ENCODE measurements at regions of chr2 and their contacts with region 1.

Region 1: GRCh38 chr2:26846328-26847306 is 1.3 kb upstream of the DPYSL5 start:
- DNase-seq: peak; percentile 70 to 82
- H3K4me3 ChIP-seq: no peak overlapping the region
- H3K4me3 Mint-ChIP-seq: peak overlapping the region; percentile 65
- H3K27ac Mint-ChIP-seq: no peak overlapping the region
- H3K4me1 ChIP-seq: peaks cover 24% of the 10 kb centered on the region
- H3K4me1 Mint-ChIP-seq: no peaks in the 10 kb centered on the region
- H3K27me3 ChIP-seq: no peaks in the 10 kb centered on the region; the same call in none of the 2 replicates
- H3K27me3 Mint-ChIP-seq: peaks cover 13% of the 10 kb centered on the region
- CTCF ChIP-seq: peak; percentile 89 to 93

Region 2: DNA sequence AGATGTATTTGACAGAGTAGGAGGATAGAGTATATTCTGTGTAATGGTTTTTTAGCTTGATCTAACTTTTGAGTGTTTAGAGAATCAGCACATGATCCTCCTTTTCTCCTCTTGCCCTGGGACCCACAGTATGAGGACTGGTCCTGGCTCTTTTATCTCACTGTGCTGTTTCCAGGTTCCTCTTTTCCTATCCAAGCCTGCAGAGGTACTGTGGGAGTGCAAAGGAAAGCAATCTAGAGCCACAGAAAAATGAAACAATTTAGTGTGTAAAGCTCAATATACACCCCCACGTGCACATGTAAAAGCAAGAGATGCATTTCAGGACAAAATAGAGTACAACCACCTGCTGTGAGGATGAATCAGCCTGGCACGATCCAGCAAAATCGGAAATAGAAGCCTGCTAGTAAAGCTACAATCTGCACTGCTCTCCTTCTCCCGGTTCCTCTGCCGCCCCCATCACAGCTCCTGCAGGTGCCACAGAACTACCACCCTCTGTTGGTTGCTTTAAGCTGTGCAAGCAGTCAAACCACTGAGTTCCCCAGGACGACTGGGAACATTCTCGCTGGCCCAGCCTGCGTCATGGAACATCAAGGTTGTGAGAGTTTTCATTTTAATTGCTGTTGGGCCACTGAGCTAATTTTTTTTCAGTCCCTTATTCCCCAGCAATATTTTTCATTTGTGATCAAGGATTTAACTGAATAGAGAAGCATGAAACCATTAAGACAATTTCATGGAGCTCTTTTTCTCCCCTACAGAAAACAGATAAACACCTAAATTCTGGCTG is 76.0 kb after region 1 on chr2:
- CTCF ChIA-PET with region 1: interaction called, 61 read pairs
- POLR2A ChIA-PET with region 1: no interaction called
- intact Hi-C with region 1: loop called (anchors 1 kb)
- DNase-seq: peak; percentile 63 to 66
- H3K4me3 ChIP-seq: no peak overlapping the region
- H3K4me3 Mint-ChIP-seq: no peak overlapping the region
- H3K27ac Mint-ChIP-seq: no peak overlapping the region
- H3K4me1 ChIP-seq: peaks cover 22% of the 10 kb centered on the region
- H3K4me1 Mint-ChIP-seq: peaks cover 25% of the 10 kb centered on the region
- H3K27me3 ChIP-seq: no peaks in the 10 kb centered on the region
- H3K27me3 Mint-ChIP-seq: no peaks in the 10 kb centered on the region
- CTCF ChIP-seq: peak; percentile 68 to 85

Region 3: GRCh38 chr2:26942543-26943295 is 96.1 kb after region 1 on chr2:
- CTCF ChIA-PET with region 1: interaction called, 77 read pairs
- POLR2A ChIA-PET with region 1: interaction called, 3 read pairs
- intact Hi-C with region 1: loop called (anchors 1 kb)
- DNase-seq: peak; percentile 68 to 80
- H3K4me3 ChIP-seq: no peak overlapping the region
- H3K4me3 Mint-ChIP-seq: no peak overlapping the region
- H3K27ac Mint-ChIP-seq: no peak overlapping the region
- H3K4me1 ChIP-seq: no peaks in the 10 kb centered on the region
- H3K4me1 Mint-ChIP-seq: peaks cover 6% of the 10 kb centered on the region
- H3K27me3 ChIP-seq: no peaks in the 10 kb centered on the region
- H3K27me3 Mint-ChIP-seq: peaks cover 12% of the 10 kb centered on the region
- CTCF ChIP-seq: peak; percentile 87 to 93

Region 4: DNA sequence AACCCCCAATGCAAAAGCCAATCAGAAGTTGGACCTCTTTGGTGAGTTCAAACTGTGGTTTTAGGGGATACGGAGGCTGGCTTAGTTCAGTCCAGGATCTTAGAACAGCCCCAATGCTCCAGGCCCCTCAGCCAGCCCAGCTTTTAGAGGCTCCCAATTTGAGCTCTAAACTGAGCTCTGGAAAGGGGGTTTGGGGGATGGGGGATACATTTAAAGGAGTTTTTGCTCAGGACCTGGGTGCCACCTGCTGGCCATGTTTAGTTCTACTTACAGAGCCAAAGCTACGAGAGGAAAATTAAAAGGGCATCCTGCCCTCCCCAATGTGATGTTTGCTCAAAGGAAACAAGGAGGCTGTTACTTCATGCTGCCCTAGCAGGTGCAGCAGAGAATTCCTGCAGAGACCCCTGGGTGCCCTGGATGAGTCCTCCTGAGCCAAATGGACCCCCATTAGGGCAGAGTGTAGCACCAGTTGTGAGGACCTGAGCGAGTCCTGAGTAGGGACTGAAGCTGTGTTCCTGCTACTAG is 170.2 kb after region 1 on chr2:
- CTCF ChIA-PET with region 1: interaction called, 46 read pairs
- POLR2A ChIA-PET with region 1: no interaction called
- intact Hi-C with region 1: loop called (anchors 1 kb)
- DNase-seq: peak; percentile 72 to 73
- H3K4me3 ChIP-seq: no peak overlapping the region
- H3K4me3 Mint-ChIP-seq: no peak overlapping the region
- H3K27ac Mint-ChIP-seq: no peak overlapping the region
- H3K4me1 ChIP-seq: peaks cover 31% of the 10 kb centered on the region
- H3K4me1 Mint-ChIP-seq: peaks cover 23% of the 10 kb centered on the region
- H3K27me3 ChIP-seq: no peaks in the 10 kb centered on the region
- H3K27me3 Mint-ChIP-seq: no peaks in the 10 kb centered on the region
- CTCF ChIP-seq: peak; percentile 64 to 85